ENCODE measurements at regions of chr11 and their contacts with region 1.

Region 1: GRCh38 chr11:75867775-75868374 is 52.9 kb downstream of the UVRAG start:
- ATAC-seq: peak in 6 of 8 experiments; percentile 33 to 52 (median 48)
- H3K4me3 ChIP-seq: no peak overlapping the region
- H3K27ac ChIP-seq: no peak overlapping the region
- H3K4me1 ChIP-seq: no peaks in the 10 kb centered on the region

Region 2: DNA sequence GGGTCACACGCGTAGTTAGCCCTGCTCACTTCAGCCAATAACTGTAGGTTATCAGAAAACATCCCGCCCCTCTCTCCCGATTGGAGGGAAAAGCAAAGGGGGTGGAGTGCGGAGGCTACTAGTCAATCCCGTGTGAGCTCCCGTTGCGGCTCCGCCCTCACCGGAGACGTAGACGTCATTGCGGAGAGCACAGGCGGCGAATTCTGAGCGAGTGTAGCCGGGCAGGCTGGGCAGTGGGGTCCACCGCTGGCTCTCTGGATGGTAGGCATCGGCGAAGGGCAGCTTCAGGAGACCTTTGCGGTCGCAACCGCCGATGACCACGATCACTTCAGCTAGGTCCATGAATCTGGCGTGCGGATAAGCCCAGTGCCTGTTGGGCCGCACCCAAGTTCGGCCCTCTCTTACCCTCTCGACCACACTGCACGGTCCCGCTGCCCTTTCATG is 439.6 kb before region 1 on chr11:
- in situ Hi-C with region 1: no loop called
- ATAC-seq: peak in 7 of 8 experiments; percentile 57 to 78 (median 74)
- H3K4me3 ChIP-seq: peak overlapping the region; percentile 25 to 50 (median 30)
- H3K27ac ChIP-seq: peak overlapping the region; percentile 51 to 63
- H3K4me1 ChIP-seq: peaks cover 26 to 47% of the 10 kb centered on the region in 2 donors

Region 3: GRCh38 chr11:75802913-75803820 is 64.7 kb before region 1 on chr11:
- in situ Hi-C with region 1: loop called in 1 of 9 experiments (anchors 10 kb)
- ATAC-seq: peak; percentile 78 to 98 (median 92)
- H3K4me3 ChIP-seq: no peak overlapping the region
- H3K27ac ChIP-seq: no peak overlapping the region
- H3K4me1 ChIP-seq: no peaks in the 10 kb centered on the region

Region 4: GRCh38 chr11:76025068-76025467 is 157.2 kb after region 1 on chr11:
- in situ Hi-C with region 1: no loop called
- ATAC-seq: peak in 3 of 8 experiments; percentile 30 to 82 (median 45)
- H3K4me3 ChIP-seq: no peak overlapping the region
- H3K27ac ChIP-seq: no peak overlapping the region
- H3K4me1 ChIP-seq: peaks cover 4% of the 10 kb centered on the region in 2 donors

Region 5: GRCh38 chr11:76288166-76288980 is 420.5 kb after region 1 on chr11:
- in situ Hi-C with region 1: no loop called
- ATAC-seq: peak in 5 of 8 experiments; percentile 12 to 55 (median 41)
- H3K4me3 ChIP-seq: no peak overlapping the region
- H3K27ac ChIP-seq: no peak overlapping the region
- H3K4me1 ChIP-seq: peaks cover 4 to 14% of the 10 kb centered on the region in 2 donors

Region 6: GRCh38 chr11:76577199-76577920 is 709.5 kb after region 1 on chr11:
- in situ Hi-C with region 1: no loop called
- ATAC-seq: peak; percentile 47 to 94 (median 64)
- H3K4me3 ChIP-seq: no peak overlapping the region
- H3K27ac ChIP-seq: no peak overlapping the region
- H3K4me1 ChIP-seq: peaks cover 18 to 26% of the 10 kb centered on the region in 2 donors

Measured in motor neuron (in vitro differentiated cells).